Cardiac septum (tissue), 1 donor: ENCODE measurements at regions of chr3 and their contacts with region 1.

Region 1: DNA sequence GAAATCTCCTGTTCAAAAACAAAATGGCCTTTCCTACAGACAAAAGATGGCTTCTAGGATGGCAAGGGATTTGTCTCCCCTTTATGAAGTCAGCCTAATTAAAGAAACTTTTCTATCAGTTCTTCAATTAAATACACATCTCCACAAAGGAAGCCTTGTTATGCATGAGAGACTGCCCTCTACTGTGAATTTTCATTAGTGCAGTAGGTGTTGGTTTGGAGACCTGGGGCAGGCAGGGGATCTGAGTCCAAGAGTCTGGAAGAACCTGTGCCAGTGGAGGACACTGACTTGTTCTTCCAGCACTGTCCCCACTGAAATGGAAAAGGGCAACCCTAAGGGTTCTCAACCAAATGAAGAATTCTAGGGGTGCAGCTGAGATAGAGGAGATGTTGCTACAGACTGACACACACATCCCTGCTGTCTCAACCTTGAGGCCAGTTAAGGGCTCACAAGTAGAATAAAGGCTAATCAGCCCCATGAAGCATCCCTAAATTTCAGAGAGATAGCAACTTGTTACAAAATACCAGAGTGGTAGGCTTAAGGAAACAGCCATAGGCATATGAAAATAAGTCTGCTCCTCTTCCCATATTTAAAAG is 174.0 kb upstream of the PRICKLE2 start:
- DNase-seq: no peak

Region 2: DNA sequence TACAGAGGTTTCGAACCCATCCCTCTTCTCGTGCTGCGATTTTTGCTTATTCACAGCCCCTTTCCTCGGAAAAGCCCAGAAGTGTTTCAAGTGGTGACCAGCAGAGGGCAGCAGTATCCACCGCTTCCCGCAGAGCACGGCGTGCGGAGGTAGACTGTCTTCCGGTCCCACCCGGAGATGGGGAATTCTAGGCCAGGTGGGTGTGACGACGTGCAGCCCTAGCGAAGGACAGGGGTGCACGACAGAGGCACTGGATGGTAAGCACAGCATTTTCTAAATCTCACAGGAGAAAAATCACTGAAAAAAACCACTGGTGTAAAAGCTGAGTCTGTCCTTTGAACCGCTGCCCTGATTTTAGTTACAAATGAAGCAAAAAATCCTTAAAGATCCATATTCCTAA is 368.6 kb before region 1 on chr3:
- intact Hi-C with region 1: loop called (anchors 1 kb)
- DNase-seq: peak; percentile 90

Region 3: DNA sequence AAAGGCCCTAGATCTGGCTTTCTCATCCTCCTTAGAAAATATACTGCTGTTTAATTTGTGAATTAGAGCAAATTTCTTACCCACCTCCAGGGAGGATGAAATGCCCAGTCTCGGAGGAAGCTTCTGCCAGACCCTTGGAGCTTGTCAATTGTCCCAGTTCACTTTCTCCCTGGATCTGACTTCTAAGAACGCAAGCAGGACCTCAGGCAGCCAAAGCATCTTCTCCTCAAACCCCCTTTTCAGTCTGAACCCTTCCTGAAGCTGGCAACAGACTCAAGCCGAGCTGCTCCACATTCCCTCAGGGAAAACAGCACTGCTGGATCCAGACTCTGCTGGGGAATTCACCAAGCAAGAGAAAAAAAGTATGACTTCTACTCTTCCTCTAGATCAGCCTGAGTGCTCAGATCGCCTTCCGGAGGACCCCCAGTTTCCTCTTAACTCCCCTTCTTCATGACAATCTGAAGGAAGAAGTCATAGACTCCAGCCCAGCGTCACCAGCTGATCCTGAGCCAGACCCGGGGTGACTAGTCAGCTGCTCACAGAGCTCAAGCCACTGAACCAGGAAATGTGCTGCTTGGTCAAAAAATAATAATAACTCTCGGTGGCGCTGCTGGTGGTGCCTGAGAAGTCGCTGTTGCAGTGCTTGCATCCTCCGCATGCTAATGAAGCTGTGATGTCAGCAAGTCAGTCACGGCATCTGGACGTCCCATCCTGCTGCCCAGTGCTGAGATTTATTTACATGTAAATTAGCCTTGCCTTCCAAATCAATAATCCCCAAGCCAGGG is 174.3 kb before region 1 on chr3 and contains the start of gene PRICKLE2:
- intact Hi-C with region 1: loop called (anchors 5 kb)
- DNase-seq: peak; percentile 83
- total RNA-seq, gene PRICKLE2: 12.4 TPM

Region 4: GRCh38 chr3:64321747-64322146 is 77.6 kb before region 1 on chr3:
- intact Hi-C with region 1: loop called (anchors 10 kb)
- DNase-seq: no peak

Region 5: DNA sequence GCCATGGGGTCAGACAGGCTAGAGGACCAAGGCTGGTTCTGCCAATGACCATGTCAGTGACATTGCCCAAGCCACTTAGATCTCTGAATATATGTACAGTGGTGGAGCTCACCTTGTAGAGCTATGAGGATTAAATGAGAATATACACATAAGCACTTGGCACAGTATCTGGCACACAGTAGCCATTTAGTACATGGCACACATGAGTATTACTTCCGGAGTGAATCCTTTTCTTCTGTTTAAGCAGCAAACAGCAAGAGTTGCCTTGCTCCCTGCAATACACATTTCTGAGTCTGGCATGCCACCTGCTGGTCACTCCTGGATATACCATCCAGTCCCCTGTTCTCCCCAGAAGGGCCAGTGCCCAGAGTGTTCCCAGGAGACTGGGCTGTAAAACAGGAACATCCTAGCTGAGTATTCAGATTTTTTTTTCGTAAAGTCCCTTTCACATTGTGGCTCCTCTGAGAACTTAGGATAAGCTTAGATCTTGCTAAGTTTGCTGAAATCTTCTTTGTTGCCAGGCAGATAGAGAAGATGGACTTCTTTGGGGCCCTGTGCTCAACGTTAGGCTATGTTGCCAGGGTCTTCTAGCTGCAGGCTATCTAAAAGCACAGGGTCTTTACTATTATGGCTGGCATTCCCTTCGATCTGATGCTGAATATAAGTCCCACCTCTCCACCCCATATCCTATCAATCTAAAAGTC is 85.1 kb after region 1 on chr3:
- intact Hi-C with region 1: loop called (anchors 5 kb)
- DNase-seq: peak; percentile 84